ENCODE measurements at regions of chr5 and their contacts with region 1.

Region 1: DNA sequence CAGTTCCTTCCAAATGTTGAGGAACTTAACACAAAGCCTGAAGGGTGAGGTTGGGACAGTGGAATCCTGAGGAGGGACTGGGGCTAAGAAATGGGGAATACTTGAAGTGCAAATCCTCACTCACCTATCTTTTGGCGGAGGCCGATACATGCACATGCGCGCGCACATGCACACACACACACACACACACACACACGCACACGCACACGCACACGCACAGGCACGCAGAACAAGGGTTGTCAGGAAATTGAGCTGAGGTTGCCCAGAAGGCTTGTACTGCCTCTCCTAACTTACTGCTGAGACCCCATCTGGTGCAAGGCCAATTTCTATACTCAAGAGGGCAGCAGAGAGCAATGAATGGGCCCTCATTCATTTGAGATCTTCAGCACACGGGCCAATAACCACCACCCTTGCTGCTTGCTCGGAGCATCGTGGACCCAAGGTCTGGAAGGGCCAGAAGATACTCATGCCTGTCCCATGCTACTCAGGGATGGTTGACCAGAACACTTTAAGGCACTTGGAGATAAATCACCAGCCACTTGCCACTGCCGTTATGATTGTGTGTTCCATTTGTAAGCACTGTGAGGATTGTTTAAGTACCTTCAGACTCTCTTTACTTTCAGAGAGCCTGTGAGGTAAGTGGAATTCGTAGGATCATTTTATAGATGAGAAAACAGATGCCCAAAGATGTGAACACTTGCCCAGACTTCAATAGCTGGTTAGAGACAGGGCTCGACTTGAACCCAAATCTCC is 21.5 kb downstream of the BTF3 start:
- DNase-seq: peak; percentile 70
- H3K4me3 Mint-ChIP-seq: peak overlapping the region; percentile 40
- H3K27ac Mint-ChIP-seq: peak overlapping the region; percentile 48
- H3K4me1 Mint-ChIP-seq: peaks cover 10% of the 10 kb centered on the region
- H3K27me3 Mint-ChIP-seq: peaks cover 2% of the 10 kb centered on the region

Region 2: DNA sequence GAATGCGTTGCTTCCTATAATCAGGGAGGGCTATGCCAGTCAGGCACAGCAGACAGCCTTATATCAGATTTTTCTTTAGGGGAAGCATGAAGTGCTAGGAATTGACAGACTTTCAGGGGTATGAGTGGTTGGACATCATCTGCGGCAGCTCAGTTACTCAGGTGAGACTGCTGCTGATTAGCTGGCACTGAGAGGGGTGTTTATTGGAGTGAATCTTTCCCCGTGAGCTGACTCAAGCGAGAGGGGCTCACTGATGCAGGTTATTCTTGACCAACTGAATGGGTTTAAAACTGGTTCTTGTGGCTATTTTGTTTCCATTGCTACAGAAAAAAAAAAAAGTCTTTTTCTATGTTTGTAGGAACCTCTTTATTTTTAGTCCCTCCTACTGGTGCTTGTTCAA is 749.4 kb before region 1 on chr5:
- intact Hi-C with region 1: no loop called
- DNase-seq: no peak
- H3K4me3 Mint-ChIP-seq: no peak overlapping the region
- H3K27ac Mint-ChIP-seq: no peak overlapping the region
- H3K4me1 Mint-ChIP-seq: no peaks in the 10 kb centered on the region
- H3K27me3 Mint-ChIP-seq: peaks cover 2% of the 10 kb centered on the region

Region 3: GRCh38 chr5:73471654-73472053 is 48.1 kb before region 1 on chr5:
- intact Hi-C with region 1: no loop called
- DNase-seq: no peak
- H3K4me3 Mint-ChIP-seq: no peak overlapping the region
- H3K27ac Mint-ChIP-seq: no peak overlapping the region
- H3K4me1 Mint-ChIP-seq: no peaks in the 10 kb centered on the region
- H3K27me3 Mint-ChIP-seq: no peaks in the 10 kb centered on the region

Region 4: GRCh38 chr5:73498057-73499008 is 21.4 kb before region 1 on chr5 and contains the start of gene BTF3:
- intact Hi-C with region 1: loop called (anchors 1 kb)
- DNase-seq: peak; percentile 92
- H3K4me3 Mint-ChIP-seq: peak within 1 kb of the TSS; percentile 99
- H3K27ac Mint-ChIP-seq: peak within 1 kb of the TSS; percentile 99
- H3K4me1 Mint-ChIP-seq: peaks cover 39% of the 10 kb centered on the region
- H3K27me3 Mint-ChIP-seq: peaks cover 12% of the 10 kb centered on the region
- total RNA-seq, gene BTF3: 913 and 929 TPM in 2 replicates

Region 5: GRCh38 chr5:73540192-73540591 is 20.5 kb after region 1 on chr5:
- intact Hi-C with region 1: loop called (anchors 1 kb)
- DNase-seq: no peak
- H3K4me3 Mint-ChIP-seq: no peak overlapping the region
- H3K27ac Mint-ChIP-seq: no peak overlapping the region
- H3K4me1 Mint-ChIP-seq: peaks cover 21% of the 10 kb centered on the region
- H3K27me3 Mint-ChIP-seq: no peaks in the 10 kb centered on the region

Region 6: GRCh38 chr5:73596705-73597328 is 77.1 kb after region 1 on chr5:
- intact Hi-C with region 1: loop called (anchors 1 kb)
- DNase-seq: no peak
- H3K4me3 Mint-ChIP-seq: no peak overlapping the region
- H3K27ac Mint-ChIP-seq: no peak overlapping the region
- H3K4me1 Mint-ChIP-seq: no peaks in the 10 kb centered on the region
- H3K27me3 Mint-ChIP-seq: peaks cover 15% of the 10 kb centered on the region

Region 7: GRCh38 chr5:73792687-73793320 is 273.1 kb after region 1 on chr5:
- intact Hi-C with region 1: loop called (anchors 1 kb)
- DNase-seq: peak; percentile 43
- H3K4me3 Mint-ChIP-seq: no peak overlapping the region
- H3K27ac Mint-ChIP-seq: no peak overlapping the region
- H3K4me1 Mint-ChIP-seq: peaks cover 11% of the 10 kb centered on the region
- H3K27me3 Mint-ChIP-seq: peaks cover 4% of the 10 kb centered on the region